ENCODE measurements at regions of chrX and their contacts with region 1.

Region 1: GRCh38 chrX:76253432-76253831 is 80.6 kb downstream of the PBDC1 start:
- DNase-seq: peak; percentile 66
- H3K4me3 Mint-ChIP-seq: no peak overlapping the region
- H3K27ac Mint-ChIP-seq: no peak overlapping the region
- H3K4me1 Mint-ChIP-seq: no peaks in the 10 kb centered on the region
- H3K27me3 Mint-ChIP-seq: peaks cover 18% of the 10 kb centered on the region
- CTCF ChIP-seq: peak; percentile 37

Region 2: GRCh38 chrX:76148753-76149152 is 104.7 kb before region 1 on chrX:
- CTCF ChIA-PET with region 1: no interaction called
- POLR2A ChIA-PET with region 1: no interaction called
- intact Hi-C with region 1: loop called (anchors 5 kb)
- DNase-seq: peak; percentile 47
- H3K4me3 Mint-ChIP-seq: peak overlapping the region; percentile 73
- H3K27ac Mint-ChIP-seq: peak overlapping the region; percentile 96
- H3K4me1 Mint-ChIP-seq: peaks cover 11% of the 10 kb centered on the region
- H3K27me3 Mint-ChIP-seq: no peaks in the 10 kb centered on the region
- CTCF ChIP-seq: no peak

Region 3: DNA sequence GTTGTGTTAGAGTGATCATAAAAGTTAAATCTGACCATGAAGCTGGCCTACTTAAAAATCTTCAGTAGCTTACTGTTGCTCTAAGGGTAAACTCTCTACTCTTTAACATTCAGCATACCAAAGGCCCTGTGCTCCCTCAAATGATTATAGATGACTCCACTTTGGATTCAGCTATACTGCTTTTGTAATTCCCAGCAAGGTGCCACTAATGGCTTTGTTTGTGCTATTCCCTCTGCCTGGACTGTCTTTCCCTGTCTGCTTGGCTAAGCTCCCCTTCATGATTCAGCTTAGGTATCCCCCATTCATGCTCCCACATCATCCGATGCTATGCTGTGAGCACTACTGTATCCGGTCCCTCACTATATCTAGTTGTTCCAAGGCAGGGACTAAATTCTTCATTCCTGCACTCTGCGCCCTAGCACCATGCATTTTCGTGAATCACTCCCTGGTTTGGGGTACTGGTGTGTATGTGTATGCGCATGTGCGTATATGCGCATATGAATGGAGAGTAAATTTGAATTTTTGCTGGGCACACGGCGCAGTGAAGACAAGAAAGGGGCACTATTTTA is 81.0 kb before region 1 on chrX:
- CTCF ChIA-PET with region 1: interaction called, 5 read pairs
- POLR2A ChIA-PET with region 1: no interaction called
- intact Hi-C with region 1: loop called (anchors 1 kb)
- DNase-seq: no peak
- H3K4me3 Mint-ChIP-seq: peak overlapping the region; percentile 83
- H3K27ac Mint-ChIP-seq: peak overlapping the region; percentile 90
- H3K4me1 Mint-ChIP-seq: peaks cover 7% of the 10 kb centered on the region
- H3K27me3 Mint-ChIP-seq: no peaks in the 10 kb centered on the region
- CTCF ChIP-seq: no peak

Region 4: GRCh38 chrX:76202471-76202870 is 51.0 kb before region 1 on chrX:
- CTCF ChIA-PET with region 1: no interaction called
- POLR2A ChIA-PET with region 1: no interaction called
- intact Hi-C with region 1: no loop called
- DNase-seq: no peak
- H3K4me3 Mint-ChIP-seq: no peak overlapping the region
- H3K27ac Mint-ChIP-seq: no peak overlapping the region
- H3K4me1 Mint-ChIP-seq: no peaks in the 10 kb centered on the region
- H3K27me3 Mint-ChIP-seq: peaks cover 10% of the 10 kb centered on the region
- CTCF ChIP-seq: no peak

Measured in MCF 10A (cell line).